Naive thymus-derived CD4-positive, alpha-beta T cell (primary cell): ENCODE measurements at regions of chr2 and their contacts with region 1.

Region 1: GRCh38 chr2:166539340-166540162 is 45.5 kb upstream of the SCN7A start:
- DNase-seq: peak in 7 of 9 donors; percentile 19 to 54 (median 43)
- ATAC-seq: peak; percentile 66
- H3K4me3 ChIP-seq: no peak overlapping the region
- H3K4me3 Mint-ChIP-seq: no peak overlapping the region
- H3K27ac ChIP-seq: no peak overlapping the region
- H3K27ac Mint-ChIP-seq: no peak overlapping the region
- H3K4me1 ChIP-seq: no peaks in the 10 kb centered on the region
- H3K4me1 Mint-ChIP-seq: peaks cover 0 to 1% (median 0%) of the 10 kb centered on the region in 7 donors
- H3K27me3 ChIP-seq: no peaks in the 10 kb centered on the region
- H3K27me3 Mint-ChIP-seq: peaks cover 0 to 18% (median 5%) of the 10 kb centered on the region in 5 donors

Region 2: DNA sequence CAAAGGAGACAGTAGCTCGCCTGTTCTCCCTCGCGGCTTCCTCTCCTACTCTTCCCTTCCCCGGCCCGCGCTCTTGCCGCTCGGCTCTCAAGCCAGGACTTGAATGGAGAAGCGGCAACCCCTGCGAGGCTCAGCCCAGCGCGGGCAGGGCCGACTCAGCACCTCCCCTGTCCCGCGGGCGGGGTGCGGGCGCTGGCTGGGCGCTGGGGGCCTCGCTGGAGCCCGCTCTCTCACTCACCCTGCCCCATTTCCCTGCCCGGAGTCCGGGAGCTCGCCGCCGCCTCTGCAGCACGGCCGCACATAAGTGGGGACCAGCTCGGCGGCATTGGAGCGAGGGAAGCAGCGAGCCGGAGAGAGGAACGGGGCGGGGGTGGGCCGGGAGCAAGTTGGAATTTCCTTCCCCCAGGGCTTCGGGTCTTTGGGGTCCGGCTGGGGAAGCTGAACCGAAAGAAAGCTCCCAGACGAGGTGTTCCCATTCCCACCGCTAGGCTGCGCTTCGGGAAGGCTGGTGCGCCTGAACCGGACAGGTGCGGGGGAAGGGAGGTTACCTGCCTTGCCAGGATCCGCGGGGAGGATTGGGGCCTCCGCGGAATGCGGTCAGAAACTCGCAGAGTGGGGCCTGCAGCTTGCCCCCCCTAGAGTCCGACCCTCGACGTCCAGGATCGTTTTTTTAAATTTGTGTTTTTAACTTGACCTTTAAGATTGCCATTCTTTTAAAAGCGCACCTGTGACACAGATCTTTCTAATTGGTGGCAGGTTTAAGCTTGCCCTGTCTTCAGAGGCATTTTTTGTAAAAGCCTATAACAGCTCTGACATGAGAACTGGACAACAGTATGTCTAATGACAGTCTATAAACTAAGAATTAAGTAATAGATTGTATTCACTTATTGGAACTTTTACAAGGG is 1697.6 kb before region 1 on chr2 and contains the start of gene COBLL1:
- CTCF ChIA-PET with region 1: no interaction called
- POLR2A ChIA-PET with region 1: no interaction called
- intact Hi-C with region 1: no loop called
- DNase-seq: peak in 6 of 9 donors; percentile 4 to 34 (median 10)
- ATAC-seq: peak; percentile 70
- H3K4me3 ChIP-seq: peak within 1 kb of the TSS; percentile 24
- H3K4me3 Mint-ChIP-seq: peak within 1 kb of the TSS; percentile 58 to 85 (median 76)
- H3K27ac ChIP-seq: no peak within 1 kb of the TSS
- H3K27ac Mint-ChIP-seq: no peak within 1 kb of the TSS
- H3K4me1 ChIP-seq: no peaks in the 10 kb centered on the region
- H3K4me1 Mint-ChIP-seq: peaks cover 0 to 9% (median 8%) of the 10 kb centered on the region in 7 donors
- H3K27me3 ChIP-seq: peaks cover 0 to 8% of the 10 kb centered on the region in 2 donors
- H3K27me3 Mint-ChIP-seq: peaks cover 28 to 65% (median 49%) of the 10 kb centered on the region in 5 donors
- total RNA-seq, gene COBLL1: 0.27 to 8.0 (median 1.7) TPM in 4 of 5 experiments, not detected in the other

Region 3: GRCh38 chr2:166895243-166895642 is 355.7 kb after region 1 on chr2:
- CTCF ChIA-PET with region 1: no interaction called
- POLR2A ChIA-PET with region 1: no interaction called
- intact Hi-C with region 1: loop called in 1 of 2 experiments (anchors 1 kb)
- DNase-seq: peak in 3 of 9 donors; percentile 2 to 10 (median 5)
- ATAC-seq: no peak
- H3K4me3 ChIP-seq: no peak overlapping the region
- H3K4me3 Mint-ChIP-seq: no peak overlapping the region
- H3K27ac ChIP-seq: no peak overlapping the region
- H3K27ac Mint-ChIP-seq: no peak overlapping the region
- H3K4me1 ChIP-seq: no peaks in the 10 kb centered on the region
- H3K4me1 Mint-ChIP-seq: no peaks in the 10 kb centered on the region
- H3K27me3 ChIP-seq: no peaks in the 10 kb centered on the region
- H3K27me3 Mint-ChIP-seq: no peaks in the 10 kb centered on the region

Region 4: GRCh38 chr2:167212014-167212648 is 672.6 kb after region 1 on chr2:
- CTCF ChIA-PET with region 1: interaction called, 4 read pairs
- POLR2A ChIA-PET with region 1: no interaction called
- intact Hi-C with region 1: loop called in 1 of 2 experiments (anchors 1 kb)
- DNase-seq: peak in 5 of 9 donors; percentile 4 to 31 (median 28)
- ATAC-seq: no peak
- H3K4me3 ChIP-seq: no peak overlapping the region
- H3K4me3 Mint-ChIP-seq: no peak overlapping the region
- H3K27ac ChIP-seq: no peak overlapping the region
- H3K27ac Mint-ChIP-seq: no peak overlapping the region
- H3K4me1 ChIP-seq: no peaks in the 10 kb centered on the region
- H3K4me1 Mint-ChIP-seq: no peaks in the 10 kb centered on the region
- H3K27me3 ChIP-seq: no peaks in the 10 kb centered on the region
- H3K27me3 Mint-ChIP-seq: peaks cover 0 to 14% (median 0%) of the 10 kb centered on the region in 5 donors